Heart right ventricle (tissue), 16 donors: ENCODE measurements at regions of chr4 and their contacts with region 1.

Region 1: GRCh38 chr4:7811536-7812191 is 128.0 kb downstream of the AFAP1 start:
- DNase-seq: peak; percentile 64 to 70
- ATAC-seq: peak; percentile 63 to 85 (median 76)
- H3K4me3 ChIP-seq: peak overlapping the region in 1 of 10 donors; percentile 12
- H3K27ac ChIP-seq: peak overlapping the region in 9 of 10 donors; percentile 67 to 84 (median 80)
- H3K4me1 ChIP-seq: peaks cover 7 to 53% (median 26%) of the 10 kb centered on the region in 9 donors
- H3K27me3 ChIP-seq: no peaks in the 10 kb centered on the region
- CTCF ChIP-seq: no peak

Region 2: GRCh38 chr4:7910952-7911578 is 99.4 kb after region 1 on chr4:
- intact Hi-C with region 1: loop called in 1 of 10 experiments (anchors 10 kb)
- DNase-seq: peak; percentile 29 to 32
- ATAC-seq: peak; percentile 32 to 78 (median 70)
- H3K4me3 ChIP-seq: peak overlapping the region in 3 of 10 donors; percentile 5 to 10 (median 5)
- H3K27ac ChIP-seq: peak overlapping the region in 9 of 10 donors; percentile 45 to 75 (median 66)
- H3K4me1 ChIP-seq: peaks cover 0 to 47% (median 10%) of the 10 kb centered on the region in 9 donors
- H3K27me3 ChIP-seq: no peaks in the 10 kb centered on the region
- CTCF ChIP-seq: no peak

Region 3: DNA sequence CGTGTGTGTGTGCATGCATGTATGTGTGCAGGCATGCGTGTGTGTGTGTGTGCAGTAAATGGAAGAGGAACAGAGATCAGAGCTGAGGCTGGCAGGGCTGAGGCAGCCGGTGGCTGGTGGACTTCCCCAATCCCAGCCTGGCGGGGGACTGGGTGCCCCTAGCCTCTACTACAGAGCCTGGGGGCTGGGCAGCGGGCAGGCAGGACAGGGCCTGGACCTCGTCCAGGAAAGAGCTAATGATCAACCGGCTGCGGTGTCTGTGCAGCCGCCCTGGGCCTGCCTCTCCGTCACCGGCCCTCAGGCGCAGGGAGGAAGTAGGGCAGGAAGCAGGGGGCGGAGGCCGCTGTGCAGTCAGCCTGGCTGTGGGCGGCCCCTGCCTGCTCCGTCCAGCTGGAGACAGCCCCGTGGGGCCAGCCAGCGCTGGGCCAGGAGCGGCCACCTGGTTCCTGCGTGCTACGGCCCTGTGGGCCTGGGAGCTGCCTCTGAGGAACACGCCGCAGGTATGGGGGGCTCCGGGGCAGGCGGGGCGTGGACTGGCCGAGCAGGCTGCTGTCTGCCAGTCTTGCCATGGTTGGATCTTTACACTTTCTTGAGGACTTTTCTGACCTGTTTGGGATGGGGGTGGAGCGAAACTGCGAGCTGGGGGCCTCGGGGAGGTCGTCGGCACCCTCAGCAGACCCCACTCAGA is 387.4 kb after region 1 on chr4 and contains the start of gene SH3TC1:
- intact Hi-C with region 1: loop called in 1 of 10 experiments (anchors 10 kb)
- DNase-seq: peak; percentile 88
- ATAC-seq: peak; percentile 90 to 93 (median 92)
- H3K4me3 ChIP-seq: peak within 1 kb of the TSS; percentile 37 to 67 (median 52)
- H3K27ac ChIP-seq: peak within 1 kb of the TSS; percentile 43 to 95 (median 82)
- H3K4me1 ChIP-seq: peaks cover 25 to 79% (median 69%) of the 10 kb centered on the region in 9 donors
- H3K27me3 ChIP-seq: no peaks in the 10 kb centered on the region
- CTCF ChIP-seq: peak in 1 of 9 donors; percentile 19
- total RNA-seq, gene SH3TC1: 7.4 to 22.8 (median 12.7) TPM